GM12878 (cell line): ENCODE measurements at regions of chr2 and their contacts with region 1.

Region 1: GRCh38 chr2:194616334-194616733 is 1040.7 kb upstream of the SLC39A10 start:
- DNase-seq: peak; percentile 15
- ATAC-seq: peak; percentile 91
- H3K4me3 ChIP-seq: no peak overlapping the region
- H3K27ac ChIP-seq: no peak overlapping the region
- H3K4me1 ChIP-seq: no peaks in the 10 kb centered on the region
- H3K27me3 ChIP-seq: no peaks in the 10 kb centered on the region
- CTCF ChIP-seq: no peak
- EP300 ChIP-seq: peak in 1 of 2 experiments; percentile 50; a peak in 1 of 4 replicates
- POLR2A ChIP-seq: no peak
- RAD21 ChIP-seq: no peak

Region 2: DNA sequence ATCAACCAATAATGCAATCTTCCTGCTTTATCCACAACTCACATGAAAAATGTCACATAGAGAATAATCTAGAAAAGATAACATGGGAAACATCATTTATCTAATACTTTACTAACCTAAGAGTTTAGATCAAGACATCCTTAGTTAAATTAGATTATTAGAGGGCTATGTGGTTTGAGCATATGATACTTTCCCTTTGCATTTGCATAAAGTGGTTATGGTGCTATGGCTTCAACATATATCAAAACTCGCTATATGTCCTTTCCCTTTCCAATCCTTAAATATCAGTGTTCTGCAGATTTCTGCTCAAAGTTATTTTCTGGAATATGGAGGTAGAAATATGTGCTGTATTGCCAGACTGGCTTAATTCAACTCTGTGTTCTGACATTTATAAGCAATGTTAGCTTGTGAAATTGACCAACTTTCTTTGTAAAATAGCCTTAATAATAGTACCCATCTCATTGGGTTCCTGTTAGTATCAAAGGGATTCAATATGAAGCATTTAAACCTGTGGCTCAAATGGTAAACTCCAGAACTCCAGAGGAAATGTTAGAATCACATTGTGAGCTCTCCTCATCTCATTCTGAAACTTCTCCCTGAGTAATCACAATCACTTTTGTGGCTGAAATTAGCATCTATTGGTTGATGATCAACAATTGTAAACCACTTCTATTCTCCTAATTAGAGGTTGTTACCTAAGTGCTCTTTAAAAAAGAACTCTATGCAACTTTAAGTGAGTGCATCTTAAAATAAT is 49.2 kb before region 1 on chr2:
- CTCF ChIA-PET with region 1: no interaction called
- POLR2A ChIA-PET with region 1: interaction called, 4 read pairs
- RAD21 ChIA-PET with region 1: interaction called, 3 read pairs
- SMC1A ChIA-PET with region 1: interaction called, 8 read pairs
- in situ Hi-C with region 1: no loop called
- intact Hi-C with region 1: loop called (anchors 1 kb)
- DNase-seq: peak; percentile 25
- ATAC-seq: peak; percentile 90
- H3K4me3 ChIP-seq: no peak overlapping the region
- H3K27ac ChIP-seq: no peak overlapping the region
- H3K4me1 ChIP-seq: no peaks in the 10 kb centered on the region
- H3K27me3 ChIP-seq: no peaks in the 10 kb centered on the region
- CTCF ChIP-seq: no peak
- EP300 ChIP-seq: peak in 1 of 2 experiments; percentile 38; a peak in 1 of 4 replicates
- POLR2A ChIP-seq: no peak
- RAD21 ChIP-seq: no peak

Region 3: GRCh38 chr2:194750926-194751325 is 134.6 kb after region 1 on chr2:
- CTCF ChIA-PET with region 1: no interaction called
- POLR2A ChIA-PET with region 1: no interaction called
- RAD21 ChIA-PET with region 1: no interaction called
- SMC1A ChIA-PET with region 1: no interaction called
- in situ Hi-C with region 1: no loop called
- intact Hi-C with region 1: no loop called
- DNase-seq: no peak
- ATAC-seq: no peak
- H3K4me3 ChIP-seq: no peak overlapping the region
- H3K27ac ChIP-seq: no peak overlapping the region
- H3K4me1 ChIP-seq: no peaks in the 10 kb centered on the region
- H3K27me3 ChIP-seq: no peaks in the 10 kb centered on the region
- CTCF ChIP-seq: no peak
- EP300 ChIP-seq: no peak
- POLR2A ChIP-seq: no peak
- RAD21 ChIP-seq: no peak